HEK293 (cell line): ENCODE measurements at regions of chrX and their contacts with region 1.

Region 1: DNA sequence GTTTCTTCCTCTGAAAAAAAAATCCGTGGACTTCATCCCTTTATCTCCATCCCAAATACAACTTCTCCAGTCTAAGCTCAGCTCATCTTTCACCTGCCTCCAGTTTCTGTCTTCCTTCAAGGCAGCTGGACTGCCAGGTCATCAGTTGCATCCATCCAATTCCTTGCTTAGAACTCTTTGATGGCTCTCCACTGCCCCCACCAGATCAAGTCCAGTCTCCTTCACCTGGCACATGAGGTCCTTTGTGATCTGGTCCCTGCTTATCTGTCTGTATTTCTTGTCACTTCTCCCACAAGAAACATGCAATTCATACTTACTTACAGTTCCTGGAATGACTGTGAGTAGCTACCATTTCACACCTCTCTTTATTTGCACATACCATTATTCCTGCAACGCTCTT is 33.8 kb downstream of the OTUD6A start:
- H3K4me3 ChIP-seq: no peak overlapping the region
- H3K27ac ChIP-seq: no peak overlapping the region
- H3K4me1 ChIP-seq: no peaks in the 10 kb centered on the region
- CTCF ChIP-seq: no peak; the same call in 1 of the 2 replicates

Region 2: GRCh38 chrX:69424161-69424560 is 671.9 kb before region 1 on chrX:
- CTCF ChIA-PET with region 1: interaction called, 22 read pairs
- POLR2A ChIA-PET with region 1: no interaction called
- H3K4me3 ChIP-seq: no peak overlapping the region
- H3K27ac ChIP-seq: no peak overlapping the region
- H3K4me1 ChIP-seq: no peaks in the 10 kb centered on the region
- CTCF ChIP-seq: no peak

Region 3: GRCh38 chrX:69538321-69538876 is 557.7 kb before region 1 on chrX:
- CTCF ChIA-PET with region 1: interaction called, 38 read pairs
- POLR2A ChIA-PET with region 1: no interaction called
- H3K4me3 ChIP-seq: peak overlapping the region; percentile 15
- H3K27ac ChIP-seq: 0 out of 2 replicates have a peak overlapping the region, but pooled peaks have one; percentile 39
- H3K4me1 ChIP-seq: no peaks in the 10 kb centered on the region; the same call in 1 of the 2 replicates
- CTCF ChIP-seq: peak; percentile 94

Region 4: DNA sequence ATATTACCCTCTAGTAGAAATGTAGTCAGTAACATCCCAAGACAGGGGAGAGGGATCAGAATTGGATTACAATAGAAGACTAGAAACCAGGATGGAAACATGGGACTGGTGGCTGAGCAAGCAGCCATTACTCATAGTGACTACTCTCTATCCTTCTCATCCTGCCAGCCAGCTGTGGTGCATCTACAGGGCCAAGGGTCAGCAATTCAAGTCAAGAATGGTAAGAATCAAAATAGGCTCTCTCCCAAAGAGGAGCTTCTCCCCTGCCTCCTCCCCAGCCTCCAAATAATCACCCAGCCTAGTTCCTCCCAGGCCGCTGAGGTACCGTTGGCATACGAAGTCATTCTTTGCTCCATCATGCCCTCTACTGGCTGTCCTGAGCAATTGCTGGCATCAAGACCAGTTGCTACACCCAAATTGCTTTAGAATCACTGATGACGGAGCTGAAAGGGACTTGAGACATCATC is 65.7 kb before region 1 on chrX:
- CTCF ChIA-PET with region 1: interaction called, 81 read pairs
- POLR2A ChIA-PET with region 1: no interaction called
- H3K4me3 ChIP-seq: no peak overlapping the region
- H3K27ac ChIP-seq: no peak overlapping the region
- H3K4me1 ChIP-seq: no peaks in the 10 kb centered on the region
- CTCF ChIP-seq: peak; percentile 76; the same call in 1 of the 2 replicates

Region 5: DNA sequence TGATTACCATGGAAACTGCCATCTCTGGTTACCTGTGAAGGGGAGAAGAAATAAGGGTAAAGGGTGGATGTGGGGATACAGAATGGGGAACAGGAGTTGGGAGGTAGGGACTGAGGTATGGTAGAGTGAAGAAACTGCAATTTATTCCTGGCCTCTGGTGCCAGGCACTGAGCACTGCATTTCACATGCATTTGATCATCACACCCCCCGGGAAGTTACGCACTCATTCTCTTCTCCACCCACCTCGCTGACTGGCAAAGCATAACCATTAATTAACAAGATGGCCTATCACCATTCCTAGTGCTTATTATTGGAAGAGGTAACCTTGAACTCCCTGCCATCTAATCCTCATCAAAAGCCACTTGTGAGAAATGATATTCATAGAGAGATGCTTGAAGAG is 39.8 kb before region 1 on chrX:
- CTCF ChIA-PET with region 1: interaction called, 10 read pairs
- POLR2A ChIA-PET with region 1: interaction called, 6 read pairs
- H3K4me3 ChIP-seq: no peak overlapping the region
- H3K27ac ChIP-seq: no peak overlapping the region
- H3K4me1 ChIP-seq: no peaks in the 10 kb centered on the region
- CTCF ChIP-seq: no peak

Region 6: DNA sequence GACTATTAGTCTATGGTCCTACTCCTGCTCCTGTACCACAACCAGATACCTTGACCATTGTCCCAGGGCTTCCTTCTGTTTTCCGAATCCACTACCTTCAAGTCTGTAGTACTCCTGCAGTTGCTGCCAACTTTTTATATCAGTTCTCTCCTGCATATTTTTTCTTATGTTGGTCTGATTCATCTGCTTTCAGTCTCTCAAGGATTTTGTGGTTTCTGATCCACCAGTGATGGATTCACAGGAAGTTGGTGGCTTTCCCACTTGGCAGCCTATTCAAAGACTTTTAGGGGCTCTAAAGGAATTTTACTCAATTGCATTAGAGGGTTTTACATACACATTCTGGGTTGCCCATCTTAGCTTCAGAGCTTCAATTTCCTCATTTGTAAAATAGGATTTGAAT is 217.5 kb after region 1 on chrX:
- CTCF ChIA-PET with region 1: no interaction called
- POLR2A ChIA-PET with region 1: no interaction called
- H3K4me3 ChIP-seq: no peak overlapping the region
- H3K27ac ChIP-seq: no peak overlapping the region
- H3K4me1 ChIP-seq: no peaks in the 10 kb centered on the region
- CTCF ChIP-seq: no peak